ENCODE measurements at regions of chr11 and their contacts with region 1.

Region 1: GRCh38 chr11:78188286-78189173 is at the starts of genes KCTD21 and USP35:
- H3K4me3 ChIP-seq: peak within 1 kb of the TSS; percentile 83
- H3K27ac ChIP-seq: no peak within 1 kb of the TSS; the same call in 1 of the 2 replicates
- H3K4me1 ChIP-seq: no peaks in the 10 kb centered on the region
- CTCF ChIP-seq: no peak

Region 2: DNA sequence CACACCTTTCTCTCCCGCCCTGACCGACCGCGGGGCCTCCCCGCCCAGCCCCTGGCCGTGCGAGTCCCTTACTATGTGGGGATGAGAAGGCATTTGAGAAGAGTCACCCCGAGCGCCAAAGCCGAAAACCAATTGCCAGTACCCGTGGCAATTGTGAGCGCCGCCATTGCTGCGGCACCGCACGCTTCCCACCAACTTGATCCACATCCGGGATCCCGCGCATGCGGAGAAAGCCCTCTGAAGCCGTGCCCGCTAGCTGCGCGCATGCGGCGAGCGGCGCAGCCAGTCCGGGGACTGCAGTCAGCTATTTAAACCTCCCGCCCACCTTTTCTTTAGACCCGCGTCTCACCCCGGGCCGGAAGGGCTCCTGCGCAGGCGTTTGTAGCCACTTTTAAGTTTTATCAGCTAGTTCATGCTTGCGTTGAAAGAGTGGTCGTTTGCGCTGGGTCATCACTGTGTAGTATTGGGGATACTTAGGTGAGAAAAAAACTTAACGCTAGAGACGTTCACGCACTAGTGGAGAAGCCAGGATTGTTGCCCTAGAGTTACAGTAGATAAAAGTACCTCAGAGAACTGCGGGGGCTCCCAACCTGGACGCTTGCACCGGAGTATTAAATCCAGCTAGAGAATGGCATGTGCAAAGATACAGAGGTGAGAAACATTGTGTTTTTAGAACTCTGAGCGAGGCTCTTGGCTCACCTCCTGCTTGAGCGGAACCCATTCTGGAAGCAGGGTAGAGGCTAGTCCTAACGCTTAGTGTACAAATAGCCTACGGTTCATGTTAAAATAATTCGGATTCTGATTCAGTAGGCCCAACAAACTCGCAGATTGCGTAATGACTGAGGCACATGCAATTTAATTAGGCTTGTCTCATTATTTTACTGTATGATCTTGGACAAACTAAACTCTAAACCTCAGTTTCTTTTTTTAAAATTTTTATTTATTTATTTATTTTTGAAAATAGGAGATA is 48.8 kb before region 1 on chr11 and contains the start of gene ALG8:
- CTCF ChIA-PET with region 1: no interaction called
- POLR2A ChIA-PET with region 1: interaction called, 21 read pairs
- H3K4me3 ChIP-seq: peak within 1 kb of the TSS; percentile 86
- H3K27ac ChIP-seq: peak within 1 kb of the TSS; percentile 46; the same call in 1 of the 2 replicates
- H3K4me1 ChIP-seq: no peaks in the 10 kb centered on the region
- CTCF ChIP-seq: no peak

Measured in HEK293 (cell line).